Activated T-helper 1 cell treated with anti-CD3 and anti-CD28 coated beads, Interleukin-12 subunit alpha, Interleukin-12 subunit beta, Interleukin-2, Interleukin-4 antibody, amounts not matched to agents 30 ng/mL and 10 ng/mL and 1 ng/mL, durations not matched to agents 14 hours and 24 hours and 36 hours (primary cell): ENCODE measurements at regions of chr11 and their contacts with region 1.

Region 1: DNA sequence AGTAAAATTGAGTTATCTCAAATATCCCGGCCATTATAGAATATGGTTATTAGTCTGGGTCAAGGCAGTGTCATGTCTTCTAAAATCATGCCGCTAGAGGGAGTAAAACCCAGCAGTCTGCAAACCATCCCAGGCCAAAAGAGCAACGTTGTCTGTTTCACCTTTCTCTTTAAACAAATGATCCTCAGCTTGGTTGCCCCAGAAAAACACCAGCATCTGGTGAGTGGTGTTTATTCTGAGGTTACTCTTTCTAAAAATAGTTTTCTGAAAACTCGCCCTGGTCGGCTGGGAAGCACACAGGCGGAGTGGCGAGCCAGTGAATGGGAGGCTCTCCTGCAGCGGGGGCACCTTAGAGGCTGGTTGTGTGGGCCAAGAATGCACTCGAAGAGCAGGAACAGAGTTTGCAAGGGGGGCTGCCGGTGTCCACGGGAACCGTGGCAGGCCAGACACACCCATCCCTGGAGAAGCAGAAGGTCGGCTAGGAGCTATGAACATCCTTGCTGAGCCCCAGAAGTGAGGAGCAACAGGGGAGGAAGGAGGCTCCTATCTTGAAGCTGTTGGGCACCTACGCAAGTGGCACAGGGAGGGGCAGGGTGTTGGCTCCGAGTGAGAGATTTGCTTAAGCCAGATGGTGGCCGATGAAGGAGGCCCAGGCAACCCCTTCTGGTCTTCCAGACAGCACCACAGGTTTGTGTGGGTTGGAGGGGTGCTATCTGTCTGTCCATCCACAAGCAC is 297.1 kb downstream of the ETS1 start:
- DNase-seq: peak; percentile 76
- H3K4me3 Mint-ChIP-seq: peak overlapping the region; percentile 90
- H3K27ac Mint-ChIP-seq: peak overlapping the region; percentile 98
- H3K4me1 Mint-ChIP-seq: peaks cover 100% of the 10 kb centered on the region
- H3K27me3 Mint-ChIP-seq: peaks cover 1% of the 10 kb centered on the region

Region 2: GRCh38 chr11:127996825-127997224 is 293.4 kb before region 1 on chr11:
- intact Hi-C with region 1: no loop called
- DNase-seq: no peak
- H3K4me3 Mint-ChIP-seq: no peak overlapping the region
- H3K27ac Mint-ChIP-seq: no peak overlapping the region
- H3K4me1 Mint-ChIP-seq: no peaks in the 10 kb centered on the region
- H3K27me3 Mint-ChIP-seq: peaks cover 7% of the 10 kb centered on the region

Region 3: DNA sequence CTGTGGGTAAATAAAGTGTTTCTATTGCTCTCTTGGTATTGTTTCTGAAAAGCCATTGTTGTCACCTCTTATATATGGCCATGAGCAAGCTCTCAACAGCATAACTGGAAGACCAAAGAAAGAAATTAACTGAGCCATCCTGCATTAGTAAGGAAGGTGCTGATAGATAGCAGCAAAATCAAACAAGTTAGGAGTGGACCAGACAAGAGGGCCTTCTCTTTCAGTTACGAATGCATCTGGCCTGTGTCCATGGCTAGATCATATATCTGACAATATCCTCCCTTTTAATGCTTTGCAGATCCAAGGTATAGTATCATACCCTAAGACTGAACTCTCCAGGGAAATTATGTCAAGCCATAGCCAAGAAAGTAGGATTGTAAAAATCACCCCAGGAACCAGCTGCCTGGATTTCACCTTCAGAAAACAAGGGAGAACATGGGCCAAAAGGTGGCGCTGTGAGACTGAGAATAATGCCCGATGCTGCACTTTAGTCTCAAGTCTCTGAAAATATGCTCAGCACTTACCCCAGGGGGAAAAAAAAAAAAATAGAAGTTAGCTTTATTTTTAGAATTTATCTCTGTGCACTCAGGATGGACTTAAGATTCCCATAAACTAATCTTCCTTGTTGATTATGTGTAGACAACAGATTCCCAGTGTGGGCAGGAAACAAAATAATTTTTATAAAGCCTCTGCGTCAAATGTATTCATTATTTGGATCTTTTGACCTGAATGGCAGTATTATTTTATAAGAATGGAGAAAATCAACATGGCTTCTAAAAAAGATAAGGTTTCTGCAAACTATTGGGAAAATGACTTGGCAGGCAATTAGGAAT is 118.0 kb before region 1 on chr11:
- intact Hi-C with region 1: loop called (anchors 1 kb)
- DNase-seq: peak; percentile 75
- H3K4me3 Mint-ChIP-seq: no peak overlapping the region
- H3K27ac Mint-ChIP-seq: peak overlapping the region; percentile 25
- H3K4me1 Mint-ChIP-seq: peaks cover 25% of the 10 kb centered on the region
- H3K27me3 Mint-ChIP-seq: no peaks in the 10 kb centered on the region

Region 4: GRCh38 chr11:128238521-128239265 is 51.6 kb before region 1 on chr11:
- intact Hi-C with region 1: loop called (anchors 1 kb)
- DNase-seq: no peak
- H3K4me3 Mint-ChIP-seq: peak overlapping the region; percentile 0
- H3K27ac Mint-ChIP-seq: peak overlapping the region; percentile 47
- H3K4me1 Mint-ChIP-seq: peaks cover 35% of the 10 kb centered on the region
- H3K27me3 Mint-ChIP-seq: peaks cover 2% of the 10 kb centered on the region

Region 5: DNA sequence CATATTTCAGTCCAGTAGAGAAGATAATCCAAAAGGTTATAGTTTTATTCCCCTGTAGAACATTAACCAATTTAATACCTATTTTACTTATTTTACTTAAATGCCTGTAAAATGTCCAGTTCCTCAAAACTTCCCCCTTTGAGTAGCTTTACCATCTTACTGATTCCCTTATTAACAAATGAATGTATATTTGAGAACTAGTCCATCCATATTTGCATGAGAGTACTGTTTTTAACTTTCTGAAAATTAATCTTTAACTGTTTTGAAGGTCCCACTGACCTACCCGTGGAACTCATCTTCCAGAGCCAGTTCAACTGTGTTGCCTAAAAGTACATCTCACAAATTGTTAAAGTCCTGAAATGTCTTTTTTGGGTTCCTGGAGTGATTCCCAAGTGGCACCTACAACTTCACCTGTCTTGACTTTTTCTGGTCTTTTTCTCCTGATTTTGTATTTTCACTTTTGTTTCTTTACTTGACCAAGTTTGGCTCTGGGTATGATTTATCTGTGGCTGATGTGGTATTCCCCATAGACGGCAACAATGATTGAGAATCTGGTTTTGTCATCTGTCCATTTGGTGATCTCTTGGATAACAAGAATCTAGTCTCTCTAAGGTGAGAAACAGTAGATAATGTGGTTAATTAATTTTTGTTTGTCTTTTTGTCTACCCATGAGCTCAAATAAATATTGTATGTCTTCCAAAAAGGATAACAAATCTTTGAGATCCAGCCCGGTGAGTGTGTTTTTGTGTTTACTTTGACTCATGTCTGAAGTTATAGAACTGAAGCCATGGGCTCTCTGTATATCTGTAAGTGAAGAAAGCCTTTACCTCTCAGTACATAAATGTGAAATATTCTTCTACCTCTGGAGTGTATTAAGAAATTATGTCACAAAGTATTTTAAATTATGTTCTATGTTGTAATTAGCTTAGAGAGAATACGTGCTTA is 122.8 kb after region 1 on chr11:
- intact Hi-C with region 1: loop called (anchors 1 kb)
- DNase-seq: no peak
- H3K4me3 Mint-ChIP-seq: peak overlapping the region; percentile 35
- H3K27ac Mint-ChIP-seq: peak overlapping the region; percentile 64
- H3K4me1 Mint-ChIP-seq: peaks cover 49% of the 10 kb centered on the region
- H3K27me3 Mint-ChIP-seq: no peaks in the 10 kb centered on the region

Region 6: DNA sequence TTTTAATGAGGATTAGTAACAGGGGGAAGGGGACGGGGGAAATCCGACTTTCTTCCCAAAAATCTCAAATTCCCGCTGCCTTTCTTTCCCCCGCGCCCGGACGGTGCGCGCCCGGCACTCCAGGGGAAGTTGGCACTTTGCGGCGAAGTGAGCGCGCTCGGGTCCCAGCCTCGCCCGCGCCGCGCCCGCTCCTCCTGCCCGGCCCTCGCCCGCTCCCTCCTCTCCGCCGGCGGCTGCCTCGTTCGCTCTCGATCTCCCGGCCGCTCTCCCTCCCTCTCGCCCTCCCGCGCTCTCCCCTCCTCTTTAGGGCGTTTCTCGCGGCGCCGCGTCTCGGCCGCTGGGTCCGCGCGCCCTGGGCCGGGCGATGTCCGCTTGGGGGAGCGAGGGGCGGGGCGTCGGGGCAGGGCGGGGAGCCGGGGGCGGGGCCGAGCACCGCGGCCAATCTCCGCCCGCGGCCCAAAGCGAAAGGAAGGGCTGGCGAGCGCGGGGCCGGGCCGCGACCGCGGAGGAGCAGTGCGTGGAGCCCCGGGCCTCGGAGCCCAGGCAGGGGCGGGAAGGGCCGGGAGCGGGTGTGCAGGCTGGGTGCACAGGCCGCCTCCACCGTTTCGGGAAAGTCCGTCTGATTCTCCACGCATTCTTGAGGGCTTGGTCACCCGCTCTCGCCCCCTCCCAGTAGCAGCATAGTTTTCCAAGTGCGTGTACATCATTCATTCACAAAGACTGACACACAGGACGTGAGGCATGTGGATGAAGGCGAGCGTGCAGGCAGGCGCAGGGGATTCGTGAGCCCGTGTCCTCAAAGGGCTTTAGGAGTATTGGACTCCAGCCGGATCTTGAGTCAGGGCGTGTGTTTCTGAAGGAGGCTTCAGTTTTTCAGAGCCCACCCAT is 232.0 kb after region 1 on chr11:
- intact Hi-C with region 1: loop called (anchors 1 kb)
- DNase-seq: peak; percentile 91
- H3K4me3 Mint-ChIP-seq: peak overlapping the region; percentile 96
- H3K27ac Mint-ChIP-seq: peak overlapping the region; percentile 98
- H3K4me1 Mint-ChIP-seq: peaks cover 65% of the 10 kb centered on the region
- H3K27me3 Mint-ChIP-seq: no peaks in the 10 kb centered on the region

Region 7: GRCh38 chr11:128733440-128734102 is 443.3 kb after region 1 on chr11:
- intact Hi-C with region 1: loop called (anchors 5 kb)
- DNase-seq: no peak
- H3K4me3 Mint-ChIP-seq: peak overlapping the region; percentile 65
- H3K27ac Mint-ChIP-seq: peak overlapping the region; percentile 71
- H3K4me1 Mint-ChIP-seq: peaks cover 97% of the 10 kb centered on the region
- H3K27me3 Mint-ChIP-seq: no peaks in the 10 kb centered on the region